PC-9 (cell line): ENCODE measurements at regions of chr2 and their contacts with region 1.

Region 1: GRCh38 chr2:239512054-239512453 is 111.2 kb upstream of the HDAC4 start:
- DNase-seq: no peak
- H3K4me3 ChIP-seq: no peak overlapping the region
- H3K27ac ChIP-seq: no peak overlapping the region
- H3K4me1 ChIP-seq: no peaks in the 10 kb centered on the region
- H3K27me3 ChIP-seq: peaks cover 100% of the 10 kb centered on the region
- CTCF ChIP-seq: no peak

Region 2: GRCh38 chr2:239159438-239159911 is 352.6 kb before region 1 on chr2:
- CTCF ChIA-PET with region 1: interaction called, 11 read pairs
- POLR2A ChIA-PET with region 1: no interaction called
- intact Hi-C with region 1: no loop called
- DNase-seq: no peak
- H3K4me3 ChIP-seq: no peak overlapping the region
- H3K27ac ChIP-seq: no peak overlapping the region
- H3K4me1 ChIP-seq: no peaks in the 10 kb centered on the region
- H3K27me3 ChIP-seq: no peaks in the 10 kb centered on the region
- CTCF ChIP-seq: no peak

Region 3: GRCh38 chr2:240906141-240906910 is 1394.3 kb after region 1 on chr2 and contains the start of gene CROCC2:
- CTCF ChIA-PET with region 1: no interaction called
- POLR2A ChIA-PET with region 1: no interaction called
- intact Hi-C with region 1: no loop called
- DNase-seq: no peak
- H3K4me3 ChIP-seq: no peak within 1 kb of the TSS
- H3K27ac ChIP-seq: no peak within 1 kb of the TSS
- H3K4me1 ChIP-seq: peaks cover 15% of the 10 kb centered on the region
- H3K27me3 ChIP-seq: no peaks in the 10 kb centered on the region
- CTCF ChIP-seq: no peak
- total RNA-seq, gene CROCC2: not detected in 2 replicates